Activated CD4-positive, alpha-beta memory T cell treated with anti-CD3 and anti-CD28 coated beads for 36 hours (primary cell): ENCODE measurements at regions of chr9 and their contacts with region 1.

Region 1: GRCh38 chr9:33139421-33140228 is 27.5 kb downstream of the B4GALT1 start:
- DNase-seq: no peak
- H3K4me3 Mint-ChIP-seq: peak overlapping the region; percentile 4
- H3K27ac Mint-ChIP-seq: peak overlapping the region; percentile 65
- H3K4me1 Mint-ChIP-seq: peaks cover 85% of the 10 kb centered on the region
- H3K27me3 Mint-ChIP-seq: no peaks in the 10 kb centered on the region

Region 2: GRCh38 chr9:33151007-33151557 is 11.5 kb after region 1 on chr9:
- CTCF ChIA-PET with region 1: interaction called, 5 read pairs
- POLR2A ChIA-PET with region 1: interaction called, 6 read pairs
- intact Hi-C with region 1: loop called (anchors 1 kb)
- DNase-seq: no peak
- H3K4me3 Mint-ChIP-seq: no peak overlapping the region
- H3K27ac Mint-ChIP-seq: no peak overlapping the region
- H3K4me1 Mint-ChIP-seq: peaks cover 87% of the 10 kb centered on the region
- H3K27me3 Mint-ChIP-seq: no peaks in the 10 kb centered on the region

Region 3: GRCh38 chr9:33159760-33160127 is 20.1 kb after region 1 on chr9:
- CTCF ChIA-PET with region 1: interaction called, 11 read pairs
- POLR2A ChIA-PET with region 1: interaction called, 10 read pairs
- intact Hi-C with region 1: loop called (anchors 1 kb)
- DNase-seq: peak; percentile 85
- H3K4me3 Mint-ChIP-seq: peak overlapping the region; percentile 66
- H3K27ac Mint-ChIP-seq: peak overlapping the region; percentile 97
- H3K4me1 Mint-ChIP-seq: peaks cover 94% of the 10 kb centered on the region
- H3K27me3 Mint-ChIP-seq: no peaks in the 10 kb centered on the region

Region 4: GRCh38 chr9:33167046-33167808 is 27.6 kb after region 1 on chr9 and contains the start of gene B4GALT1:
- CTCF ChIA-PET with region 1: interaction called, 11 read pairs
- POLR2A ChIA-PET with region 1: interaction called, 5 read pairs
- intact Hi-C with region 1: loop called (anchors 1 kb)
- DNase-seq: peak; percentile 98
- H3K4me3 Mint-ChIP-seq: peak within 1 kb of the TSS; percentile 95
- H3K27ac Mint-ChIP-seq: peak within 1 kb of the TSS; percentile 97
- H3K4me1 Mint-ChIP-seq: peaks cover 48% of the 10 kb centered on the region
- H3K27me3 Mint-ChIP-seq: no peaks in the 10 kb centered on the region
- total RNA-seq, gene B4GALT1: 76.6 to 78.0 TPM

Region 5: GRCh38 chr9:33415501-33416038 is 275.9 kb after region 1 on chr9:
- CTCF ChIA-PET with region 1: no interaction called
- POLR2A ChIA-PET with region 1: no interaction called
- intact Hi-C with region 1: no loop called
- DNase-seq: peak; percentile 97
- H3K4me3 Mint-ChIP-seq: peak overlapping the region; percentile 33
- H3K27ac Mint-ChIP-seq: peak overlapping the region; percentile 95
- H3K4me1 Mint-ChIP-seq: peaks cover 52% of the 10 kb centered on the region
- H3K27me3 Mint-ChIP-seq: no peaks in the 10 kb centered on the region